GM10248 (cell line): ENCODE measurements at regions of chr10 and their contacts with region 1.

Region 1: GRCh38 chr10:110137142-110137545 is 70.3 kb upstream of the MXI1 start:
- DNase-seq: peak; percentile 56
- CTCF ChIP-seq: peak; percentile 56

Region 2: GRCh38 chr10:110151467-110151866 is 14.3 kb after region 1 on chr10:
- CTCF ChIA-PET with region 1: interaction called, 28 read pairs
- POLR2A ChIA-PET with region 1: no interaction called
- DNase-seq: no peak
- CTCF ChIP-seq: no peak

Region 3: GRCh38 chr10:110210674-110211464 is 73.7 kb after region 1 on chr10:
- CTCF ChIA-PET with region 1: interaction called, 16 read pairs
- POLR2A ChIA-PET with region 1: no interaction called
- DNase-seq: peak; percentile 96
- CTCF ChIP-seq: no peak

Region 4: DNA sequence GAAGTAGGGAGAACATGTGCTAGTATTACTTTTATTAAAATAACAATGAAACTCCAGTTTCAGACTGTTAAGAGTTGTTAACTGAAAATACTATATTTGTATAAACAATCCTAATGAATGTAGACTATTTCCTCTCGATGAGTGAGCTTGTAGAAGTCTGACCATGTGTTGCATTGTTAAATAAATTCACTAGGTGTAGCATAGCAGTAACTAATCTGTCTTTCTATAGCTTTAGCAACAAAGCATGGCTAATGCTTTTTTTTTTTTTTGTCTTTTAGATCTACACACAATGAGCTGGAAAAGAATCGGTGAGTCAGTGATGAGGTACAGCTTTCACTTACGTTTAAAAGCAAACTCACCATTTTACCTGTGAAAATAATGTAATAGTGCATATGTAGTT is 107.4 kb after region 1 on chr10:
- CTCF ChIA-PET with region 1: interaction called, 11 read pairs
- POLR2A ChIA-PET with region 1: no interaction called
- DNase-seq: no peak
- CTCF ChIP-seq: no peak

Region 5: DNA sequence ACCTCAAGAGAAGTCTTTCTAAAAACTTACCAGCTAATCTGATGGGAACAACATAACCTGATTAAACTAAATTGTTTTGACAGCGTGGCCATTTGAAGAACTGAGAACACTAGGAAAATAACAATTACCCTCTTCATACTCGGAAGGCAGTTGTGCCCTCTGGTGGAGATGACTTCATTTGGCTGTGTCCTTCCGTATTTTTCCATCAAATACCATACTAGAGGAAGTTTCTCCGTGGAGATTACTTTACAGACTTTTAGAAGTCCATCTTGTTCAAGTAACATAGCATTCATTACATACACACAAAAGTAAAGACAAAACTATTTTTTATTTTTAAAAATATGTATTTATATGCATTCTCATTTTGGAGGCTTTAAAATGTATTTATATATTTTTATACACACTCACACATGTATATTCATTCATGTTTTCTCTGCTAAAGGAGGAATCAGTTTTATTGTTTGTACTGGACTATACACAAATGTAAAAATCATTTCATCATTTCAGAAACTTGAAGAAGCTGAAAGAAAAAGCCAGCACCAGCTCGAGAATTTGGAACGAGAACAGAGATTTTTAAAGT is 142.4 kb after region 1 on chr10:
- CTCF ChIA-PET with region 1: interaction called, 39 read pairs
- POLR2A ChIA-PET with region 1: no interaction called
- DNase-seq: peak; percentile 41
- CTCF ChIP-seq: peak; percentile 66